OCI-LY7 (cell line): ENCODE measurements at regions of chr17 and their contacts with region 1.

Region 1: GRCh38 chr17:69551212-69552010 is 136.9 kb downstream of the MAP2K6 start:
- DNase-seq: no peak
- H3K4me3 ChIP-seq: no peak overlapping the region
- H3K27ac ChIP-seq: no peak overlapping the region
- H3K4me1 ChIP-seq: peaks cover 3% of the 10 kb centered on the region
- CTCF ChIP-seq: no peak

Region 2: DNA sequence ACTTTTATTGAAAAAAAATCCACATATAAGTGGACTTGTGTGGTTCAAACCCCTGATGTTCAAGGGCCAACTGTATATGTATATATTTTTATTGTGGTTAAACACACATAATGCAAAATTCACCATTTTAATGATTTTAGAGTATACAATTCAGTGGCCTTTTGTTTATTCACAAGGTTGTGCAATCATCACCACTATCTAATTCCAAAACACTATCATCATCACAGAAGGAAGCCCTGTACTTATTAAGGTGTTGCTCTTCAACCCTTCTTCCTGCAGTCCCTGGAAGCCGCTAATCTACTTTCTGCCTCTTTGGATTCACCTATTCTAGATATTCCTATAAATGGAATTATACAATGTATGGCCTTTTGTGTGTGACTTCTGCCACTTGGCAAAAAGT is 113.9 kb before region 1 on chr17:
- CTCF ChIA-PET with region 1: no interaction called
- POLR2A ChIA-PET with region 1: no interaction called
- intact Hi-C with region 1: no loop called
- DNase-seq: no peak
- H3K4me3 ChIP-seq: no peak overlapping the region
- H3K27ac ChIP-seq: no peak overlapping the region
- H3K4me1 ChIP-seq: no peaks in the 10 kb centered on the region
- CTCF ChIP-seq: no peak

Region 3: GRCh38 chr17:69539781-69540319 is 11.6 kb before region 1 on chr17:
- CTCF ChIA-PET with region 1: no interaction called
- POLR2A ChIA-PET with region 1: interaction called, 14 read pairs
- intact Hi-C with region 1: no loop called
- DNase-seq: no peak
- H3K4me3 ChIP-seq: no peak overlapping the region
- H3K27ac ChIP-seq: no peak overlapping the region
- H3K4me1 ChIP-seq: no peaks in the 10 kb centered on the region
- CTCF ChIP-seq: no peak

Region 4: GRCh38 chr17:69654981-69655855 is 103.8 kb after region 1 on chr17:
- CTCF ChIA-PET with region 1: no interaction called
- POLR2A ChIA-PET with region 1: no interaction called
- intact Hi-C with region 1: no loop called
- DNase-seq: peak; percentile 84
- H3K4me3 ChIP-seq: no peak overlapping the region
- H3K27ac ChIP-seq: peak overlapping the region; percentile 65
- H3K4me1 ChIP-seq: peaks cover 21% of the 10 kb centered on the region
- CTCF ChIP-seq: no peak

Region 5: GRCh38 chr17:69802039-69802740 is 250.8 kb after region 1 on chr17:
- CTCF ChIA-PET with region 1: no interaction called
- POLR2A ChIA-PET with region 1: no interaction called
- intact Hi-C with region 1: no loop called
- DNase-seq: no peak
- H3K4me3 ChIP-seq: no peak overlapping the region
- H3K27ac ChIP-seq: no peak overlapping the region
- H3K4me1 ChIP-seq: no peaks in the 10 kb centered on the region
- CTCF ChIP-seq: no peak